ENCODE measurements at regions of chr14 and their contacts with region 1.

Region 1: GRCh38 chr14:102774391-102775153 is 2.7 kb upstream of the TRAF3 start:
- DNase-seq: peak; percentile 84
- H3K4me3 ChIP-seq: no peak overlapping the region
- H3K27ac ChIP-seq: no peak overlapping the region
- H3K4me1 ChIP-seq: peaks cover 7% of the 10 kb centered on the region
- H3K27me3 ChIP-seq: no peaks in the 10 kb centered on the region
- CTCF ChIP-seq: peak; percentile 82

Region 2: GRCh38 chr14:102764220-102764671 is 10.3 kb before region 1 on chr14:
- CTCF ChIA-PET with region 1: no interaction called
- POLR2A ChIA-PET with region 1: no interaction called
- intact Hi-C with region 1: no loop called
- DNase-seq: no peak
- H3K4me3 ChIP-seq: no peak overlapping the region
- H3K27ac ChIP-seq: no peak overlapping the region
- H3K4me1 ChIP-seq: peaks cover 24% of the 10 kb centered on the region
- H3K27me3 ChIP-seq: no peaks in the 10 kb centered on the region
- CTCF ChIP-seq: no peak

Region 3: DNA sequence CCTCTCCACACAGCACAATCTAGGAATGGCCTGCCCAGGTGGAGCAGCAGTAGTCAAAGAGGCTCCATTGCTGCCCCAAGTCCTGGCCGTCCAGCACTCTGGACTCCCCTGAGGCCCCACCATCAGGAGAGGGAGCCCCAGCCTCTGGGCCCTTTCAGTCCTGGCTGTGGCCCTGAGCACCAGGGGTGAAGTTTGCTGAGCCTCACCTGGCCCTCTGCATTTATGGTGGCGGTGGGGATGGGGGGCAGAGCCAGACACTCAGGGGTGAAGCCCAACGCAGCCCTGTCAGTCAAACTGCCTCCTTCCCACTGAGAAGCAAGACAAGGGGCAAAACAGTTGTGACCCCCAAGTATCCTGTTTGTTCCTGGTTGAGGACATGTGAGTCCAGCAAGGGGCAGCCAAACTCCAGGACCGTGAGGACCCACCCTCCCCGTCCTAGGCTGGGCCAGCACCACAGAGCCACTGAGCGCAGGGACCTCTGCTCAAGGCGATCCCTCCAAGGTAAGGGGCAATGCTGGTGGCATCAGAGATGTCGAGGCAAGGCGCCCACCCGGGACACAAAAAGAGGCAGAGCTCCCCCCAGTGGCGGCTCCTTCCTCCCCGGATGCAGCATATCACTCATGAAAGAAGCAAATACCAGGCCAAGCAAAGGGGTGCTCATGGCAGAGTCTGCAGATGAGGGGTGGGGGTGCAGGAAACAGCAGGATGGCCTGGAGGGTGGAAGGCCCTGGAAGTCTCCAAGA is 143.1 kb after region 1 on chr14:
- CTCF ChIA-PET with region 1: interaction called, 3 read pairs
- POLR2A ChIA-PET with region 1: no interaction called
- intact Hi-C with region 1: loop called (anchors 2 kb)
- DNase-seq: peak; percentile 78
- H3K4me3 ChIP-seq: no peak overlapping the region
- H3K27ac ChIP-seq: no peak overlapping the region
- H3K4me1 ChIP-seq: no peaks in the 10 kb centered on the region
- H3K27me3 ChIP-seq: peaks cover 2% of the 10 kb centered on the region
- CTCF ChIP-seq: peak; percentile 88

Measured in A673 (cell line).